Heart left ventricle (tissue), 16 donors: ENCODE measurements at regions of chr6 and their contacts with region 1.

Region 1: DNA sequence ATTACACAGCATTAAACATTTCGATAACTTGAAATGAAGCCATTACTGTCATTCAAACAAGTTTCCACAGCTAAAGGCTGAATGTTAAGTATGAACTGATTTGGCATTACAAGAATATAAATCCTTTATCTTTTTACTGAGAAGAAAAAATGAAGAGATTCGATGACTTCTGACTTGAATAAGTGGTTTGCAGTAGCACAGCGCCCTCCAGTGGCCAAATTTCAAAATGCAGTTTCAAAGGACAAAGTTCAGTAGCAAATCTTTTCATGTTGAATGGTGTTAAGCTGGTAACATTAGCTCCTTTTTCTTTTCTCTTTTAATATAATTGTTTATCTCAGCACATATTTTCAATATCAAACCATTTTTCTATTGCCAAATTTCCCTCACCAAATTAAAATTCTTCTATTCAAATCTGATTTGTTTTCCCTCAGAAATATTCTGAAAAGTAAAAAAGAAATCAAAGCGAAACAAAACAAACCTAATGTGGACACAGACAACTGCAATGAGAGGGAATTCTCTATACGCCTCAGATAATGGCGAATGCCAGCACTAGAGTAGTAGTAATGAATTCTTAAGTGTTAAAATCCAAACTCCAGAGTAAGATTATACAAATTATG is 145.7 kb downstream of the BTBD9 start:
- DNase-seq: peak in 4 of 5 donors; percentile 47 to 69 (median 56)
- ATAC-seq: peak in 2 of 4 donors; percentile 41 to 51
- H3K4me3 ChIP-seq: no peak overlapping the region
- H3K27ac ChIP-seq: no peak overlapping the region
- H3K4me1 ChIP-seq: no peaks in the 10 kb centered on the region
- H3K27me3 ChIP-seq: no peaks in the 10 kb centered on the region
- CTCF ChIP-seq: peak; percentile 90 to 99 (median 95)
- POLR2A ChIP-seq: no peak

Region 2: GRCh38 chr6:37691904-37692806 is 801.9 kb before region 1 on chr6:
- intact Hi-C with region 1: loop called in 1 of 10 experiments (anchors 10 kb)
- DNase-seq: peak; percentile 62 to 81 (median 68)
- ATAC-seq: peak; percentile 62 to 87 (median 86)
- H3K4me3 ChIP-seq: no peak overlapping the region
- H3K27ac ChIP-seq: no peak overlapping the region
- H3K4me1 ChIP-seq: peaks cover 6 to 19% (median 15%) of the 10 kb centered on the region in 12 donors
- H3K27me3 ChIP-seq: peaks cover 0 to 48% (median 23%) of the 10 kb centered on the region in 9 donors
- CTCF ChIP-seq: peak; percentile 91 to 98 (median 96)
- POLR2A ChIP-seq: no peak

Region 3: DNA sequence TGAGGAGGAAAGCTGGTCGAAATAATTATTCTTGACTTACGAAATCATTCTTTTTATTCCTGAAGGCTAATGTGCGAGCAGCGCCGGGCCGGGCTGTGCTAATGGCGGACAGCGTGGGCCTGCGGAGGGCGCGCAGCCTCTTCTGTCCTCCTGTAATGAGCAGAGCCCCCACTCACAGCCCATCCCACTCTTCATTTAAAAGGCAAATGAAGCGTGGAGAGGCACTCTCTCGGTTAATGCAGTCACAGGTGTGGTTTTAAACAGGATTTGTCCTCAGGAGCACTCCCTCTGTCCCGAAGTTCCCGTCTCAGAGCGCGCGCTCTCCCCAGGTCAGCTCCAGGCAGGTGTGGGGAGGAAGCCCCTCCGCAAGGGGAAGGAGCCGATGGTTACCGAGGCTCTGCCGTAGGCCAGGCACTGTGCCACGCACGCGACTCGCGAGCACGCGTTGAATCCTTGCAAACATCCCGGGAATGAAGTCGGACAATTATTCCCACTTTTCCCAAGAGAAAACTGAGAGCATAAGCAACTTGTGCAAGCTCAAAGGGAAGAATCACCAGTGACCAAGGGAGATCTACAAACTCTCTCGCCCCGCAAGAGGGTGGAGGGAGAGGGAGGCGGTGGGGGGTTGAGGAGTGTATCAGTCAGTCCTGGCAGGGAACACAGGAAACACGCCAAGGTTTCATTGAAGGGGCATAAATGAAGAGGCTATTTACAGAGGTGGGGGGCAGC is 710.0 kb before region 1 on chr6:
- intact Hi-C with region 1: loop called in 1 of 10 experiments (anchors 10 kb)
- DNase-seq: no peak
- ATAC-seq: peak; percentile 52 to 78 (median 68)
- H3K4me3 ChIP-seq: peak overlapping the region; percentile 26 to 66 (median 52)
- H3K27ac ChIP-seq: peak overlapping the region in 2 of 12 donors; percentile 15 to 51
- H3K4me1 ChIP-seq: peaks cover 0 to 24% (median 12%) of the 10 kb centered on the region in 12 donors
- H3K27me3 ChIP-seq: peaks cover 0 to 19% (median 0%) of the 10 kb centered on the region in 9 donors
- CTCF ChIP-seq: peak in 5 of 12 donors; percentile 7 to 33 (median 12)
- POLR2A ChIP-seq: no peak

Region 4: GRCh38 chr6:38027685-38028373 is 466.2 kb before region 1 on chr6:
- intact Hi-C with region 1: loop called in 8 of 10 experiments (anchors 2 to 10 kb)
- DNase-seq: no peak
- ATAC-seq: no peak
- H3K4me3 ChIP-seq: no peak overlapping the region
- H3K27ac ChIP-seq: no peak overlapping the region
- H3K4me1 ChIP-seq: peaks cover 0 to 28% (median 15%) of the 10 kb centered on the region in 12 donors
- H3K27me3 ChIP-seq: no peaks in the 10 kb centered on the region
- CTCF ChIP-seq: no peak
- POLR2A ChIP-seq: no peak

Region 5: GRCh38 chr6:38039502-38039901 is 454.5 kb before region 1 on chr6:
- intact Hi-C with region 1: loop called in 7 of 10 experiments (anchors 5 to 10 kb)
- DNase-seq: no peak
- ATAC-seq: no peak
- H3K4me3 ChIP-seq: no peak overlapping the region
- H3K27ac ChIP-seq: no peak overlapping the region
- H3K4me1 ChIP-seq: peaks cover 0 to 21% (median 5%) of the 10 kb centered on the region in 12 donors
- H3K27me3 ChIP-seq: no peaks in the 10 kb centered on the region
- CTCF ChIP-seq: no peak
- POLR2A ChIP-seq: no peak

Region 6: GRCh38 chr6:38443352-38444146 is 50.5 kb before region 1 on chr6:
- intact Hi-C with region 1: no loop called
- DNase-seq: no peak
- ATAC-seq: peak in 3 of 4 donors; percentile 49 to 56 (median 53)
- H3K4me3 ChIP-seq: no peak overlapping the region
- H3K27ac ChIP-seq: peak overlapping the region in 1 of 12 donors; percentile 29
- H3K4me1 ChIP-seq: peaks cover 0 to 26% (median 7%) of the 10 kb centered on the region in 12 donors
- H3K27me3 ChIP-seq: no peaks in the 10 kb centered on the region
- CTCF ChIP-seq: no peak
- POLR2A ChIP-seq: no peak

Region 7: DNA sequence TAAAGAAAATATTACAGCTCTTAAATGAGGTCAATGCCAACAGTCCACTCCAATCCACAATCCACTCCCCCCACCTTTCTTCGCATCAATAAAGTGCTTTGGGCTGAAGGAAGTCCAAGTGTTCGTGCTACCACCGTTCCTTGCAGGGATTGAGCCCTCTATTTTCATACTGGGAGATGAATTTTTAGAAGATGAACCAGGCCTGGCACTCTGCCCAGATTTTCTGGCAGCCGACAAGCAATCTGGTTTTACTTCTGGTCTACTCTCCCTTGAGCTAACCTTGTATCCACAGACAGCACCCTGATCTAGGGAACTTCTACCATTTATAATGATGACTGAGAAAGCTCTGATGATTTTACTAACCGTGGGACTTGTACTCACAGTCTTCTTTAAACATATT is 73.4 kb after region 1 on chr6:
- intact Hi-C with region 1: no loop called
- DNase-seq: peak; percentile 77 to 85 (median 82)
- ATAC-seq: peak; percentile 76 to 81 (median 80)
- H3K4me3 ChIP-seq: no peak overlapping the region
- H3K27ac ChIP-seq: no peak overlapping the region
- H3K4me1 ChIP-seq: peaks cover 0 to 18% (median 2%) of the 10 kb centered on the region in 12 donors
- H3K27me3 ChIP-seq: no peaks in the 10 kb centered on the region
- CTCF ChIP-seq: no peak
- POLR2A ChIP-seq: no peak

Region 8: DNA sequence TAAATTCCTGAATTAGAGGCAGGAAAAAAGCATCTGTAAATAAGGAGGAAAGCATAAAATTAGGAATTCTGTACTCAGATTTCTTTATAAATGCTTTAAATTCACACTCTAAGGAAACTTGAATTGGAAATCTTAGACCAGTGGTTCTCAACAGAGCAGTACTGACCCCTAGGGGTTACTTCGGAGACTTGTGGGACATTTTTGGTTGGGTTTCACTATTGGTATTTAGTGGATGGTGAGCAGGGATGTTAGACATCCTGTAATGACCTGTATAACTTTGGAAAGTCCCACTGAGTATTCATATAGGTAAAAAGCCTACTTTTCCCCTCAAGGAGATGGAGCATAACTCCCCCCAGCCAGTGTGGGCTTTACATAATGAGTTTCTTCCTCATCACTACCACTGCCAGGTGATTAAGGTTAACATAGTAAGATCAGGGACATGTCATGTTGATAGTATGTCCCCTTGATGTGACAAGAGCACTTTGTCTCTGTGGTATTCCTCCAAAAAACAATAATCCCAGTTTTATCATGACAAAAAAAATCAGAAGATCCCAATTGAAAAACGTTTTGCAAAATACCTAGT is 177.9 kb after region 1 on chr6:
- intact Hi-C with region 1: loop called in 1 of 10 experiments (anchors 10 kb)
- DNase-seq: no peak
- ATAC-seq: peak in 3 of 4 donors; percentile 50 to 74 (median 66)
- H3K4me3 ChIP-seq: no peak overlapping the region
- H3K27ac ChIP-seq: no peak overlapping the region
- H3K4me1 ChIP-seq: peaks cover 0 to 6% (median 0%) of the 10 kb centered on the region in 12 donors
- H3K27me3 ChIP-seq: no peaks in the 10 kb centered on the region
- CTCF ChIP-seq: peak; percentile 51 to 76 (median 72)
- POLR2A ChIP-seq: no peak